ENCODE measurements at regions of chr2 and their contacts with region 1.

Region 1: DNA sequence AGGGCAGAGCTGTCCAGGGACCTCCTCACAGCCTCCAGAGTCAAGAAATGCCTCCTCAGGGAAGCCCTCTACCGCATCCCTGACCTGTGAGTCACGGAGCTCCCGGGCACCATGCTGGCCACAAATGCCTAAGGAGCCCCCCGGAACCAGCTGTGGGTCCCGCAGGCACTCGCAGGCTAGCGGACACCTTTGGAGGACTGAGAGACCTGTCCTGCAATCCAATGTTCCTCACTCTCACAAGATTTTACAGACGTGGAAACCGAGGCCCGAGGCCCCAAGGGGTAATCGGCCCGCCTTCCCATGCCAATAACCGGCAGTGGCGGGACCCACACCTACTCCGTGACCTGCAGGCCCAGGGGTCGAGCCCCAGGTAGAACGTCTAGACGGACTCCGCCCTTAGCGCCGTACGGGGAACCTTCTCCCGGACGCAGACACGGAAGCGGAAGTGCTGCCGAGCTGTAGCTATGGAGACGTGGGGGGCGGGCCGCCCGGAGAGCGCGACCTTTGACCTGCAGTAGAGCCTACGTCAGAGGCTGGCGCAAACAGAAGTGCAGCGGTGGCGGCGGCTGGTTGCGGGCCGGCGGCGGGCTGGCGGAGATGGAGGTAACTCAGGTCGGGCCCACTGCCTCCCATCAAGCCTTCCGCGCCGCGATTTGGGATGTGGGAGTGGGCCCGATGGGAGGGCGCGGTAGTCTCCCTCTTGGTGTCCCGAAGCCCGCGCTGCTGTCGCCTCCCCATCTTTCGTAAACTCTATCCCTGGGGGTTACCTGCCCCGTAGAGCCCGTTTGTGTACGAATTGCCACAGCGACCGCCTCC is at the start of gene GCC2:
- DNase-seq: peak; percentile 97
- H3K4me3 Mint-ChIP-seq: peak within 1 kb of the TSS; percentile 87
- H3K27ac Mint-ChIP-seq: peak within 1 kb of the TSS; percentile 91
- H3K4me1 Mint-ChIP-seq: peaks cover 27% of the 10 kb centered on the region
- H3K27me3 Mint-ChIP-seq: no peaks in the 10 kb centered on the region
- total RNA-seq, gene GCC2: 33.5 to 39.4 TPM

Region 2: DNA sequence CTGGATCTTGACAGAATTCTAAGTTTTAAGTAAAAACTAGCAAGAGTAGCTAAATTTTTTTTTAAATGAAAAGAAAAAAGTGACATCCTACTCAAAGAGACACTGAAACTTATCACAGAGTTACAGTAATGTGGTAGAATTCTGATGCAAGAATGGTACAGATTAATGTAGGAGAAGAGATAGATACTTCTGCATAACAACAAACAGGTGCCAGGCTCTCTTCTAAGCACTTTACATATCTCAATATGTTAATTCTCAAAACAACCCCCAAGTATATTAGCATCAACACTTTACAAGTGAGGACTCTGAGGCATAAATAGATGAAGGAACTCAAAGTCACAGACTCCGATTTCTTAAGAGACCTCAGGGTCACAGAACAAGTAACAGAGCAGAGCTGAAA is 28.2 kb after region 1 on chr2:
- CTCF ChIA-PET with region 1: no interaction called
- intact Hi-C with region 1: loop called (anchors 1 kb)
- DNase-seq: no peak
- H3K4me3 Mint-ChIP-seq: no peak overlapping the region
- H3K27ac Mint-ChIP-seq: peak overlapping the region; percentile 70
- H3K4me1 Mint-ChIP-seq: peaks cover 7% of the 10 kb centered on the region
- H3K27me3 Mint-ChIP-seq: no peaks in the 10 kb centered on the region

Measured in activated naive CD4-positive, alpha-beta T cell treated with anti-CD3 and anti-CD28 coated beads for 36 hours (primary cell).